ENCODE measurements at regions of chr11 and their contacts with region 1.

Region 1: GRCh38 chr11:33027846-33028536 is 11.4 kb upstream of the TCP11L1 start:
- DNase-seq: no peak
- ATAC-seq: no peak
- H3K4me3 ChIP-seq: no peak overlapping the region
- H3K27ac ChIP-seq: no peak overlapping the region
- H3K4me1 ChIP-seq: peaks cover 8% of the 10 kb centered on the region; the same call in 2 of the 3 replicates
- CTCF ChIP-seq: no peak
- EP300 ChIP-seq: no peak
- POLR2A ChIP-seq: no peak
- RAD21 ChIP-seq: no peak

Region 2: DNA sequence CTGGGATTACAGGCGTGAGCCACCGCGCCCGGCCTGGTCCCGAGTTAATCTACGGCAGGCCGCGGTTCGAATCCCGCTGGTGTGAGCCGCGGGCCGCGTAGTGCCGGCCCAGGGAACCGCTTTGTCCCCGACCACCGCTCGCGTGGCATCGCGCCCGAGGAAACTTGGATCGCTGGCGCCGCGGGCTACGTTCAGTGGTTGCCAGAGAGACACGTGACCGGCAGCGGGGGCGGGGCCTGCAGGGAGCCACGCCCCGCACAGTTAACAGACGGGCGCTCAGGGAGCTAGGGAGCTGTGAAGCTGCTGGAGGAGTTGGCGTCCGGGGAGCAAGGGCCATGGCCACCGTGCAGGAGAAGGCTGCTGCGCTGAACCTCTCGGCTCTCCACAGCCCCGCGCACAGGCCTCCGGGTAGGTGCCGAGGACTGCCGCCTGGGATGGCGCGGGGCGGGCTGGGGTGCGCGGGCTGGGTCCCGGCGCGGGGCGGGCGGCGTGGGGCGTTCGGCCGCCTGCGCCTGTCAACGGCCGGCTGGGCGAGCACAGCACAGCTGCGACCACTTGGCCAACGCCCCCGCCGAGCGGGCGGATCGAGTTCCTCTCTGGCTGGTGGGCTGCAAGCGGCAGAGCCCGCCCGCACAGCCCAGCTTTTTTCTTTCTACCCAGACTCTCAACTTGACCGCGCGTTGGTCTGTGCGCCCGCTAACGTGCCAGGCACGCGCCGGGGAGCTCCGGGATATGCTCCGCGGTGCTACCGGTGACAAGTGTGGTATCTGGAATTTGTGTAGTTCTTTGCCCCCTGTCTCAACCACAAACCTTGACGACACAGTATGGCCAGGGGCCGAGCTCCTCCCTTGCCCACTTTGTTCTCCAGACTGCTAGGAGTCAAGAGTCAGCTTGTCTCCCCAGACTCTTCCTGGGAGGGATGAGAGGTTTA is 12.1 kb before region 1 on chr11 and contains the start of gene DEPDC7:
- CTCF ChIA-PET with region 1: interaction called, 12 read pairs
- POLR2A ChIA-PET with region 1: interaction called, 8 read pairs
- DNase-seq: peak; percentile 89 to 92
- ATAC-seq: peak; percentile 94 to 95
- H3K4me3 ChIP-seq: peak within 1 kb of the TSS; percentile 82
- H3K27ac ChIP-seq: peak within 1 kb of the TSS; percentile 76 to 90
- H3K4me1 ChIP-seq: peaks cover 38% of the 10 kb centered on the region
- CTCF ChIP-seq: no peak
- EP300 ChIP-seq: no peak
- POLR2A ChIP-seq: peak; percentile 78
- RAD21 ChIP-seq: no peak
- polyA plus RNA-seq, gene DEPDC7: 15.2 and 16.6 TPM in 2 replicates

Measured in A549 (cell line).